K562 (cell line): ENCODE measurements at regions of chr1 and their contacts with region 1.

Region 1: GRCh38 chr1:21659099-21659923 is 9.8 kb downstream of the RAP1GAP start:
- DNase-seq: peak; percentile 90 to 100 (median 99)
- ATAC-seq: peak; percentile 96
- H3K4me3 ChIP-seq: peak overlapping the region; percentile 36
- H3K27ac ChIP-seq: no peak overlapping the region
- H3K4me1 ChIP-seq: peaks cover 13 to 31% of the 10 kb centered on the region in 2 experiments; a peak in 4 of 5 replicates
- H3K27me3 ChIP-seq: no peaks in the 10 kb centered on the region
- CTCF ChIP-seq: peak; percentile 89 to 97 (median 97)
- EP300 ChIP-seq: no peak; the same call in 1 of the 2 replicates
- POLR2A ChIP-seq: 0 out of 2 replicates have a peak, but pooled peaks have one; percentile 33
- RAD21 ChIP-seq: peak; percentile 97

Region 2: DNA sequence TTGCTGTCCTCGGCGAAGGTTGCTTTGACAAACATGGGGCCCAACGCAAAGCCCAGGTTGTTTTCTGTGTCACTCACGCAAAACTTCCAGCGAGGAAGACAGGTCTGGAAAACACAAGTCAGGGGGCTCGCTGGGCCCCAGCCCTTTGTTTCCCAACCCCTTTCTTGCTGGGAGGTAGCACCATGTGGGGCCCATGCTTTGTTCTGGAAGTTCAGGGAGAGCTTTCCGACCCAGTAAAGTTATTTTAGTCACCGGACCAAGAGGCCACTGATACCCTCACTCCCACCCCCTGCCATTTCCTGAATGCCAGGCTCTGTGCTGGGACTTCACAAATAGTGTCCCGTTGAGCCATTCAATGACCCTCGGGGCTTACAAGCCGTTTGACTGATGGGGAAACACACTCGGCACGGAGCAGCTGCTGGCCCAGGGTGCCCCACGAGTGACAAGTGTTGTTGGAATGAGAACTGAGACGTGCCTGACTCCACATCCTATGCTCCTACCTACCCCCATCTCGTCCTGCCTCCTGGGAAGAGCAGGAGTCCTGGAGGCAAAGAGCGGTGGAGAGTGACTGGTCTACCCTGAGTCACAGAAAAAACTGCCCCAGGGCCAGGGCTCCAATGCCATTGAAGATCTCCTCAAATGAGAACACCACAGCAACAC is 421.0 kb before region 1 on chr1:
- CTCF ChIA-PET with region 1: no interaction called
- POLR2A ChIA-PET with region 1: no interaction called
- in situ Hi-C with region 1: no loop called
- intact Hi-C with region 1: loop called (anchors 5 kb)
- DNase-seq: no peak
- ATAC-seq: no peak
- H3K4me3 ChIP-seq: no peak overlapping the region
- H3K27ac ChIP-seq: no peak overlapping the region
- H3K4me1 ChIP-seq: no peaks in the 10 kb centered on the region
- H3K27me3 ChIP-seq: no peaks in the 10 kb centered on the region
- CTCF ChIP-seq: no peak
- EP300 ChIP-seq: no peak
- POLR2A ChIP-seq: no peak
- RAD21 ChIP-seq: no peak

Region 3: GRCh38 chr1:21508580-21509350 is 150.5 kb before region 1 on chr1:
- CTCF ChIA-PET with region 1: interaction called, 3 read pairs
- POLR2A ChIA-PET with region 1: interaction called, 3 read pairs
- in situ Hi-C with region 1: loop called (anchors 25 kb)
- intact Hi-C with region 1: loop called (anchors 5 kb)
- DNase-seq: peak; percentile 82 to 98 (median 94)
- ATAC-seq: peak; percentile 97
- H3K4me3 ChIP-seq: no peak overlapping the region
- H3K27ac ChIP-seq: no peak overlapping the region
- H3K4me1 ChIP-seq: peaks cover 0 to 14% of the 10 kb centered on the region in 2 experiments; a peak in 3 of 5 replicates
- H3K27me3 ChIP-seq: peaks cover 30 to 45% of the 10 kb centered on the region in 2 experiments
- CTCF ChIP-seq: peak; percentile 64 to 82 (median 75)
- EP300 ChIP-seq: no peak
- POLR2A ChIP-seq: no peak
- RAD21 ChIP-seq: peak; percentile 44 to 74

Region 4: GRCh38 chr1:21594935-21595897 is 64.1 kb before region 1 on chr1:
- CTCF ChIA-PET with region 1: no interaction called
- POLR2A ChIA-PET with region 1: interaction called, 4 read pairs
- in situ Hi-C with region 1: no loop called
- intact Hi-C with region 1: loop called (anchors 2 kb)
- DNase-seq: peak; percentile 81 to 87 (median 83)
- ATAC-seq: peak; percentile 83
- H3K4me3 ChIP-seq: no peak overlapping the region
- H3K27ac ChIP-seq: no peak overlapping the region
- H3K4me1 ChIP-seq: peaks cover 6 to 58% of the 10 kb centered on the region in 2 experiments; a peak in 3 of 5 replicates
- H3K27me3 ChIP-seq: 0 out of 5 replicates have a peak, but pooled peaks cover 0 to 7% of the 10 kb centered on the region in 2 experiments
- CTCF ChIP-seq: peak; percentile 89 to 95 (median 92)
- EP300 ChIP-seq: no peak
- POLR2A ChIP-seq: peak; percentile 51; the same call in 1 of the 2 replicates
- RAD21 ChIP-seq: peak; percentile 72 to 90

Region 5: DNA sequence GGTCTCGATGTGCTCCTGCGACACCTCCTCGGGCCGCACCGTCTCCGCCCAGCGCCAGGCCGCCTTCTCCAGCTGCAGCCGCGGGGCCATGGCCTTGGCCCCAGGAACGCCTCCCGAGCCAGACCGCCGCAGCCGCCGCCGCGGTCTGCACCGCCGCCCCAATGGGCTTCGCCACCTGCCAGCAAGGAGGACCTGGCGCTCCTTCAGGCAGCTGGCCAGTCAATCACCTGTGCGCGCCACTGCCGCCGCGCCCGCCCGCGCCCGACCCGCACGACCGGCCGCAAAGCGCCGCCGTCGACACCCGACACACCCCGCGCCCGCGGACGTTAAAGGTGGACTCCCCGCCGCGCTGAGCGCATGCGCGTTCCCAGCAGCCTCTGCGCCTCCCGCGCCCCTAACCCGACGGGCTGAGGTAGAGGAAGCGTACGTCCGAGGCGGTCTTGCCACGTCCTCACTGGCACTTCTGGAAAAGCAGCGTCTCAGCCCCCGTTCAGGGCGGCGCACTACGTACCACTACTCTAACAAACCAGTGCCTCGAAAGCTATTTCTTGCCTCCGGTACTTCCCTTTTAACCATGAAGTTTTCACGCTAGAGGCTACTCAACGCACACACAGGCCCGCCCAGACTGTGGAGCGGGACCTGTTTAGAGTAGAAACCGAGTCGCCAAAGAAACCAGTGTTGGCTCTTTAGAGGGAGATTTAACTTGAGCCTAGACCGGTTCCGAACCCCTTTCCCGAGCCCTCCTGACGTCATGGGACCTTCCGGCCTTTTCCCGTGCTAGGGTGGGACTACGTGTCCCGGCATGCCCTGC is 123.8 kb after region 1 on chr1 and contains the start of gene USP48:
- CTCF ChIA-PET with region 1: interaction called, 4 read pairs
- POLR2A ChIA-PET with region 1: no interaction called
- in situ Hi-C with region 1: no loop called
- intact Hi-C with region 1: loop called (anchors 1 kb)
- DNase-seq: peak; percentile 96 to 100 (median 98)
- ATAC-seq: peak; percentile 81
- H3K4me3 ChIP-seq: peak within 1 kb of the TSS; percentile 61
- H3K27ac ChIP-seq: peak within 1 kb of the TSS; percentile 99
- H3K4me1 ChIP-seq: peaks cover 17 to 31% of the 10 kb centered on the region in 2 experiments; a peak in 4 of 5 replicates
- H3K27me3 ChIP-seq: no peaks in the 10 kb centered on the region
- CTCF ChIP-seq: no peak
- EP300 ChIP-seq: peak; percentile 36
- POLR2A ChIP-seq: peak; percentile 100
- RAD21 ChIP-seq: no peak
- polyA plus RNA-seq, gene USP48: 23.3 to 30.3 TPM

Region 6: DNA sequence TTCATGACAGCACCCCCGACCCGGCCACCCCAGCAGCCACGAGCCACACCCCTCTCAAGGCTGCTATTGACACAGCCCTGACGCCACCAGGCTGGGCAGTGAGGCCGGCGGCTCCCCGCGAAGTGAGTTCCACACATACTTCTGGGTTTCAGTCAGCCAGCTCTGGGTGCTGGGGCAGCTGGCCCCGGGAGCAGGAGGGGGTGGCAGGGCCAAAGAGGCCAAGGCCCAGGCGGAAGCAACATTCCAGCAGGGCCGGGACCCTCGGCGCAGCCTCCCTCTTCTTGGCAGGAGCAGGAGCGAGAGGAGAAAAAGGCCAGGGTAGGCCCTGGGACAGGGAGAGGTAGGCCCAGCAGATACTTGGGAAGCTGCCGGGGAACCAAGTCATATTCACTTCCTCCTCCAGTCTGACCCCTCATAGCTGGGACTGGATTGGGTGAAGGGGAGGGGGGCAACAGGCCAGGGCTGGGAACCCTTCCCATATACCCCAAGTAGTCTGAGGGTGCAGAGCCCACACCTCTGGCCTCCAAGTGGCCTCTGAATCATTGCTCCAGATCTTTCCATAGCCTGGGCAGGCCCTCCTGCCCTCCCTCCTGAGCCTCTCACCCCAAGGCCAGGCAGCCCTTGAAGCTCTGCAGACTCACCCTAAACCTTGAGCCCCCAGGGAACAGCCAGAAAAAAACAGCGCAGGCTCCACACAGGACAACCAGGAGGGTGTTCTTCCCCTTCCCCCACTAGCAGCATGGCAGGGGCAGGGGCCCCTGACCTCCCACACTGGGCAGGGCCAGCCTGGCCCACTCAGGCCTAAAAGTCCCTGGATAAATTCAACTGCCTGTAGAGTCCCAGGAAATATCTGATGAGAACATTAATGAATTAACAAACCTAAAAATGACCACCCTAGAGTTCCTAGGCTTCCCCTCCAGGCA is 272.1 kb after region 1 on chr1:
- CTCF ChIA-PET with region 1: no interaction called
- POLR2A ChIA-PET with region 1: no interaction called
- in situ Hi-C with region 1: no loop called
- intact Hi-C with region 1: no loop called
- DNase-seq: peak in 1 of 4 experiments; percentile 44
- ATAC-seq: 0 out of 3 replicates have a peak, but pooled peaks have one; percentile 4
- H3K4me3 ChIP-seq: no peak overlapping the region
- H3K27ac ChIP-seq: peak overlapping the region; percentile 17; the same call in 2 of the 3 replicates
- H3K4me1 ChIP-seq: peaks cover 59 to 72% of the 10 kb centered on the region in 2 experiments
- H3K27me3 ChIP-seq: no peaks in the 10 kb centered on the region
- CTCF ChIP-seq: no peak
- EP300 ChIP-seq: no peak
- POLR2A ChIP-seq: no peak
- RAD21 ChIP-seq: no peak

Region 7: DNA sequence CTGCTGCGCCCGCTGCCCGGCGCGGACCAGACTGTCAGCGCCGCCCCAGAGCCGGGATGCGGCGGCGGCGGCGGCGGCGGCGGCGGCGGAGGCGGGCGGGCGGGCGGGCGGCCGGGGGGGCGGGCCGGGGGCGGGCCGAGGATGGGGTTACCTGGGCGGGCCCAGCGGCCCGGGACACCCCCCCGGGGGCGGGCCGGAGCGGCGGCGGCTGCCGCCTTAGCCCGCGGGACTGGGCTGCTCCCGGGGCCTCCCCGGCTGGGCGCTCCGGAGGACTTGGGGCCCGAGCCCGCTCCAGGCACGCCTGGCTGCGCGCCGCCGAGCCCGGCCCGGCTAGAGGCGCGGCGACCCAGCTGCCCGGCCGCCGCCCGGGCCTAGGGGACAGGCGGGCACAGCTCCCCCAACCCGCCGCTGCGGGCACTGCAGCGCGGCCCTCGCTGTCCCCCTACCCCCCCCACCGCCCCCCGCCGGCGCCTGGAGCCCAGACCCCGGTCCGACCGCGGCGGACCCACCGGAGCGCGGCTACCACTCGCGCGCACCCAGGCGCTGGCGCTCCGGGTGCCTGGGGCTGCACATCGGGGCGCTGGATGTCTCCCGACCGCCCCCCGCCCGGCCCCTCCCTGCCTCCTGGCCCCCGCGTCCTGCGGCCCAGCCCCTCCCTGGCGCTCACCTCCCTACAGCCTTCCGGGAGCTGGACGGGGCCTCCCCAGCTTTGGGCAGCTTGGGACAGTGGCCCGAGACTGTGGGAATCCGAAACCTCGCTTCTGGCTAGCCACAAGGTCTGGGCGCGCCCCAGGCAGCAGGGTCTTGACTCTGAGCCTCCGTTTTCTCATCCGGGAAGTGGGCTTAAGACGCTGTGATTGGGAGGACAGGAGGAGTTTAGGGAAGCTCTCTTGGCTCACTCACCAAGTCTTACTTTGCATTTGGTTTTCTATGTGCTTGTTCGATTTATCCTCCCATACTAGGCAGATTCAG is 484.0 kb after region 1 on chr1 and contains the start of gene WNT4:
- CTCF ChIA-PET with region 1: no interaction called
- POLR2A ChIA-PET with region 1: no interaction called
- in situ Hi-C with region 1: no loop called
- intact Hi-C with region 1: no loop called
- DNase-seq: peak; percentile 27 to 97 (median 89)
- ATAC-seq: peak; percentile 64
- H3K4me3 ChIP-seq: no peak within 1 kb of the TSS
- H3K27ac ChIP-seq: no peak within 1 kb of the TSS
- H3K4me1 ChIP-seq: peaks cover 0 to 21% of the 10 kb centered on the region in 2 experiments; a peak in 2 of 5 replicates
- H3K27me3 ChIP-seq: peaks cover 72% of the 10 kb centered on the region in 2 experiments
- CTCF ChIP-seq: peak in 1 of 3 experiments; percentile 8; a peak in 1 of 6 replicates
- EP300 ChIP-seq: no peak
- POLR2A ChIP-seq: no peak
- RAD21 ChIP-seq: no peak
- polyA plus RNA-seq, gene WNT4: 0.01 TPM in 1 of 2 experiments, not detected in the other